ENCODE measurements at regions of chr17 and their contacts with region 1.

Region 1: GRCh38 chr17:65163990-65164495 is 26.9 kb downstream of the RGS9 start:
- DNase-seq: peak; percentile 85
- H3K4me3 Mint-ChIP-seq: no peak overlapping the region
- H3K27ac Mint-ChIP-seq: peak overlapping the region; percentile 11
- H3K4me1 Mint-ChIP-seq: peaks cover 12% of the 10 kb centered on the region
- H3K27me3 Mint-ChIP-seq: no peaks in the 10 kb centered on the region

Region 2: GRCh38 chr17:65181237-65182061 is 17.4 kb after region 1 on chr17:
- CTCF ChIA-PET with region 1: interaction called, 3 read pairs
- intact Hi-C with region 1: loop called (anchors 1 kb)
- DNase-seq: peak; percentile 56
- H3K4me3 Mint-ChIP-seq: no peak overlapping the region
- H3K27ac Mint-ChIP-seq: peak overlapping the region; percentile 50
- H3K4me1 Mint-ChIP-seq: peaks cover 32% of the 10 kb centered on the region
- H3K27me3 Mint-ChIP-seq: no peaks in the 10 kb centered on the region

Region 3: GRCh38 chr17:65324611-65325342 is 160.7 kb after region 1 on chr17:
- CTCF ChIA-PET with region 1: no interaction called
- intact Hi-C with region 1: no loop called
- DNase-seq: no peak
- H3K4me3 Mint-ChIP-seq: no peak overlapping the region
- H3K27ac Mint-ChIP-seq: no peak overlapping the region
- H3K4me1 Mint-ChIP-seq: no peaks in the 10 kb centered on the region
- H3K27me3 Mint-ChIP-seq: no peaks in the 10 kb centered on the region